SK-N-SH (cell line): ENCODE measurements at regions of chr17 and their contacts with region 1.

Region 1: GRCh38 chr17:17141860-17142552 is 64.1 kb downstream of the PLD6 start:
- DNase-seq: peak; percentile 84
- H3K4me3 ChIP-seq: no peak overlapping the region; a peak in 1 of 4 replicates
- H3K27ac ChIP-seq: no peak overlapping the region; a peak in 1 of 4 replicates
- H3K4me1 ChIP-seq: peaks cover 0 to 9% of the 10 kb centered on the region in 2 experiments; a peak in 2 of 4 replicates
- H3K27me3 ChIP-seq: no peaks in the 10 kb centered on the region
- CTCF ChIP-seq: peak; percentile 86
- EP300 ChIP-seq: no peak
- RAD21 ChIP-seq: peak; percentile 60

Region 2: GRCh38 chr17:17001874-17002520 is 140.0 kb before region 1 on chr17:
- CTCF ChIA-PET with region 1: interaction called, 10 read pairs
- POLR2A ChIA-PET with region 1: no interaction called
- DNase-seq: peak; percentile 92
- H3K4me3 ChIP-seq: no peak overlapping the region
- H3K27ac ChIP-seq: no peak overlapping the region
- H3K4me1 ChIP-seq: no peaks in the 10 kb centered on the region; a peak in 1 of 4 replicates
- H3K27me3 ChIP-seq: no peaks in the 10 kb centered on the region; the same call in 1 of the 2 replicates
- CTCF ChIP-seq: peak; percentile 98
- EP300 ChIP-seq: no peak
- RAD21 ChIP-seq: peak; percentile 94

Region 3: DNA sequence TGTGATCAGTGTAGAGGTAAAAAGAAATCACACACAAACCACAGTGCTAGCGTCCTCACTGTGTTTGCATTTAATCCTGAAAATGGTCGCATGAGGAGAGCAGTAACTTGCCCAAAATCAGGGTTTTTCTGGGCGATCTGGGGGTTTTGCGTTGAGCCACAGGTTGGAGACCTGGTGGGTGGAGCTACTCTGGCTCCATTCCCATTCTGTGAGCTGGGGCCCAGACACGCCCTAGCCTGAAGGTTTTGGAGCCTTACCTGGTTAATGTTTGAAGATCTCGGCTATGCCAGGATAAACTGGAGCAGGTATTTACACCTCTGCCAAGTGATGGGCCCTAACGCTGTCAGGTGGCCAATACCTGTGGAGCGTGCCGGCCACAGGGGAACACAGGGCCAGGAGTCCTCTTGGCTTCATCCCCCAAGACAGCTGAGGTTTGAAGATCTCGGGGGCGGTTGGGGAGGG is 51.3 kb before region 1 on chr17:
- CTCF ChIA-PET with region 1: no interaction called
- POLR2A ChIA-PET with region 1: no interaction called
- DNase-seq: no peak
- H3K4me3 ChIP-seq: no peak overlapping the region
- H3K27ac ChIP-seq: no peak overlapping the region
- H3K4me1 ChIP-seq: peaks cover 0 to 3% of the 10 kb centered on the region in 2 experiments; a peak in 1 of 4 replicates
- H3K27me3 ChIP-seq: no peaks in the 10 kb centered on the region
- CTCF ChIP-seq: no peak
- EP300 ChIP-seq: no peak
- RAD21 ChIP-seq: no peak

Region 4: DNA sequence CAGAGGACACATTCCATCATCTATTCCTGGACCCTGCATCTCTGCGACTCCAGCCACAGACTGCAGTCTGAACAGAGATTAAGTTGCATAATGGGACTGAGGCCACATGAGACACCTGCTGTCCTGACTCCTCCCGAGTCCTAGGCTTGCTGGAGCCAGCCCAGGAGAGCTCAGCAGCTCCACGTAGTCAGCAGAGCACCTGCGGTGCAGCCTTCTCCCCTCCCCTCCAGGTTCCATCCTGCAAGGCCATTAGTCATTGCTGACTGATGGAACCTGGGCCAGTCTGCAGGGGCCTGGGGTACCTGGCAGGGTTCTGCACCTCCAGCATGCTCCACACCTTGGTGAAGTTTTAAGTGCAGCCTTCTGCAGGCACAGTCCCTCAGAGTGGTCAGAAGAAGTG is 12.5 kb before region 1 on chr17:
- CTCF ChIA-PET with region 1: interaction called, 22 read pairs
- POLR2A ChIA-PET with region 1: no interaction called
- DNase-seq: no peak
- H3K4me3 ChIP-seq: no peak overlapping the region
- H3K27ac ChIP-seq: no peak overlapping the region
- H3K4me1 ChIP-seq: peaks cover 0 to 18% of the 10 kb centered on the region in 2 experiments; a peak in 1 of 4 replicates
- H3K27me3 ChIP-seq: no peaks in the 10 kb centered on the region
- CTCF ChIP-seq: no peak
- EP300 ChIP-seq: no peak
- RAD21 ChIP-seq: no peak

Region 5: GRCh38 chr17:17179371-17179827 is 37.4 kb after region 1 on chr17:
- CTCF ChIA-PET with region 1: no interaction called
- POLR2A ChIA-PET with region 1: no interaction called
- DNase-seq: no peak
- H3K4me3 ChIP-seq: no peak overlapping the region
- H3K27ac ChIP-seq: no peak overlapping the region; a peak in 1 of 4 replicates
- H3K4me1 ChIP-seq: peaks cover 0 to 18% of the 10 kb centered on the region in 2 experiments; a peak in 1 of 4 replicates
- H3K27me3 ChIP-seq: no peaks in the 10 kb centered on the region
- CTCF ChIP-seq: no peak
- EP300 ChIP-seq: no peak
- RAD21 ChIP-seq: no peak